IMR-90 (cell line): ENCODE measurements at regions of chr4 and their contacts with region 1.

Region 1: GRCh38 chr4:163755013-163755412 is 260.5 kb downstream of the TMA16 start:
- DNase-seq: peak; percentile 43
- ATAC-seq: peak; percentile 51; the same call in 1 of the 2 replicates
- H3K4me3 ChIP-seq: no peak overlapping the region
- H3K27ac ChIP-seq: no peak overlapping the region
- H3K4me1 ChIP-seq: no peaks in the 10 kb centered on the region
- H3K27me3 ChIP-seq: no peaks in the 10 kb centered on the region
- CTCF ChIP-seq: peak; percentile 68
- POLR2A ChIP-seq: no peak
- RAD21 ChIP-seq: peak; percentile 62; the same call in 1 of the 2 replicates

Region 2: DNA sequence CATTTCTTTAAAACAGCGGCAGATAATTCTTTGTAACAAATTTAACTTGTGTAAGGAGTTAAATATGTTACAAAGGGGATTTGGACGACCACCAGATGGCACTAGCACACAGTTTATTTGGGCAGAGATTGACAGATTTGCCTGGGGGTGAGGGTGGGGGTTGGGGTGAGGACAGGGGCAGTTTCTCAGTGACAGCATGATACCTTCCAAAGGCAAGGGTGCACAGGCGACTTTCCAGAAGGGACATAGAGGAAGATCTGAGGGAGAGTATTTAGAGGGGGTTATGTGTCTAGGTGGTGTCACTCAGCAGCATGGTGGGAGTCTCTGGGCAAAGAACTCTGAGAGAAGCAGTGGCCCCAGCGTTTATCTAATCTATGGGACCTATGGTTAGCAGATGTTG is 270.1 kb before region 1 on chr4:
- CTCF ChIA-PET with region 1: no interaction called
- POLR2A ChIA-PET with region 1: no interaction called
- dilution Hi-C with region 1: no loop called
- in situ Hi-C with region 1: no loop called
- intact Hi-C with region 1: loop called (anchors 2 kb)
- DNase-seq: peak; percentile 51
- ATAC-seq: peak; percentile 72
- H3K4me3 ChIP-seq: no peak overlapping the region
- H3K27ac ChIP-seq: no peak overlapping the region
- H3K4me1 ChIP-seq: no peaks in the 10 kb centered on the region
- H3K27me3 ChIP-seq: peaks cover 7% of the 10 kb centered on the region
- CTCF ChIP-seq: peak; percentile 65
- POLR2A ChIP-seq: no peak
- RAD21 ChIP-seq: peak; percentile 67

Region 3: DNA sequence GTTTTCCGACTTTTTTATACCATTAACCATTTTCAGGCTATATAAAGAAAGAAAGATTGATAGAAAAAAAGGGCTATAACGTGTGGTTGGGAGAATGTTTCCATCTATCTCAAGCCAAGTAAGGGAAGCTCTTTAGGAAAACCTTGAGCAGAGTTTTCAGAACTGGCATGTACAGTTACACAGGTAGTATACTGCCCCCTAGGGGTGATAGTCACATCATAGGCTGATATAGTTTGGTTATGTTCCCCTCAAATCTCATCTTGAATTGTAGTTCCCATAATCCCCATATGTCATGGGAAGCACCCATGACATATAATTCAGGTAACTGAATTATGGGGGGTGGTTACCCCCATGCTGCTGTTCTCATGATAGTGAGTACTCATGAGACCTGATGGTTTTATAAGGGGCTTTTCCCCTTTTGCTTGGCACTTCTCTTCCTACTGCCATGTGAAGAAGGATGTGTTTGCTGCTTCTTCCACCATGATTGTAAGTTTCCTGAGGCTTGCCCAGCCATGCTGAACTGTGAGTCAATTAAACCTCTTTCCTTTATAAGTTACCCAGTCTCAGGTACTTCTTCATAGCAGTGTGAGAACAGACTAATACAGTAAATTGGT is 73.7 kb before region 1 on chr4:
- CTCF ChIA-PET with region 1: interaction called, 5 read pairs
- POLR2A ChIA-PET with region 1: no interaction called
- dilution Hi-C with region 1: loop called (anchors 10 kb)
- in situ Hi-C with region 1: no loop called
- intact Hi-C with region 1: loop called (anchors 1 kb)
- DNase-seq: peak; percentile 28
- ATAC-seq: no peak; the same call in 1 of the 2 replicates
- H3K4me3 ChIP-seq: no peak overlapping the region
- H3K27ac ChIP-seq: no peak overlapping the region
- H3K4me1 ChIP-seq: no peaks in the 10 kb centered on the region
- H3K27me3 ChIP-seq: no peaks in the 10 kb centered on the region
- CTCF ChIP-seq: peak; percentile 44
- POLR2A ChIP-seq: no peak
- RAD21 ChIP-seq: peak; percentile 21; the same call in 1 of the 2 replicates

Region 4: GRCh38 chr4:164659765-164660164 is 904.8 kb after region 1 on chr4:
- CTCF ChIA-PET with region 1: no interaction called
- POLR2A ChIA-PET with region 1: no interaction called
- dilution Hi-C with region 1: no loop called
- in situ Hi-C with region 1: no loop called
- intact Hi-C with region 1: no loop called
- DNase-seq: no peak
- ATAC-seq: no peak
- H3K4me3 ChIP-seq: no peak overlapping the region
- H3K27ac ChIP-seq: no peak overlapping the region
- H3K4me1 ChIP-seq: no peaks in the 10 kb centered on the region
- H3K27me3 ChIP-seq: no peaks in the 10 kb centered on the region
- CTCF ChIP-seq: no peak
- POLR2A ChIP-seq: no peak
- RAD21 ChIP-seq: no peak

Region 5: GRCh38 chr4:164731827-164732474 is 976.9 kb after region 1 on chr4:
- CTCF ChIA-PET with region 1: no interaction called
- POLR2A ChIA-PET with region 1: interaction called, 4 read pairs
- dilution Hi-C with region 1: no loop called
- in situ Hi-C with region 1: no loop called
- intact Hi-C with region 1: loop called (anchors 10 kb)
- DNase-seq: peak; percentile 28
- ATAC-seq: peak; percentile 68; the same call in 1 of the 2 replicates
- H3K4me3 ChIP-seq: no peak overlapping the region
- H3K27ac ChIP-seq: no peak overlapping the region
- H3K4me1 ChIP-seq: no peaks in the 10 kb centered on the region
- H3K27me3 ChIP-seq: no peaks in the 10 kb centered on the region
- CTCF ChIP-seq: peak; percentile 73
- POLR2A ChIP-seq: no peak
- RAD21 ChIP-seq: peak; percentile 72